Mammary epithelial cell (primary cell): ENCODE measurements at regions of chr19 and their contacts with region 1.

Region 1: GRCh38 chr19:46503848-46504453 is 8.3 kb upstream of the PNMA8B start:
- DNase-seq: no peak
- H3K4me3 ChIP-seq: no peak overlapping the region
- H3K27ac ChIP-seq: no peak overlapping the region
- H3K4me1 ChIP-seq: no peaks in the 10 kb centered on the region
- H3K27me3 ChIP-seq: no peaks in the 10 kb centered on the region
- CTCF ChIP-seq: no peak

Region 2: DNA sequence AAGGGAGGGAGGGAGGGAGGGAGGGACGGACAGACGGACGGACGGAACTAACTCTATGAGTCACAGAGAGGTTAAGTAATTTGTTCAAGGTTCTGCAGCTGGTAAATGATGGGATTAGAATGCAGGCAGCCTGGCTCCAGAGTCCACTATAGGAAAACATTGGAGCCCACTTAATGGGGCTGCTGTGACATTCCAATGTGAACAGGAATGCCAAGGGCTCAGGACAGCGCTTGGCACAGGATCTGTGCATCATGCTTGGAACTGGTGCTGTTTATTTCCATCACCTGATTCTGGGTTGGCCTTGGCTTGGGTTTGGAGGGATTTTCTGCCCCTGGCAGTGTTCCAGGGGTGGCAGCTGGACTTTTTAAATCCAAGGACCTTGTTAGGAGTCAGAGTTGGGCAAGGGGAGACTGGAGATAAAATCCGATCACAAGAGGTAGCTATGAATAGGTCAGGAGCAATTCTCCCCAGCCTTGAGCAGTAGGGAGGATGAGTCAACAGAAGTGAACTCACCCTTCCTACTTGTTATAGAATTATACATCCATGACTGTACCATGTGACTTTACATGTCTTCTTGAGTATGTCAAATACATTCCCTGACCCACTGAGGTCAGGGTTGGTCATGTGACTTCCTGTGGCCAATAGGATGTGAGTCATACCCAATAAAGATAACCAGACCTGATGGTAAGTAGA is 214.9 kb before region 1 on chr19:
- CTCF ChIA-PET with region 1: no interaction called
- dilution Hi-C with region 1: no loop called
- in situ Hi-C with region 1: loop called in 1 of 2 experiments (anchors 10 kb)
- intact Hi-C with region 1: no loop called
- DNase-seq: peak; percentile 94
- H3K4me3 ChIP-seq: no peak overlapping the region
- H3K27ac ChIP-seq: peak overlapping the region; percentile 45
- H3K4me1 ChIP-seq: peaks cover 10% of the 10 kb centered on the region
- H3K27me3 ChIP-seq: no peaks in the 10 kb centered on the region
- CTCF ChIP-seq: no peak

Region 3: GRCh38 chr19:46600384-46601317 is 96.7 kb after region 1 on chr19:
- CTCF ChIA-PET with region 1: no interaction called
- dilution Hi-C with region 1: no loop called
- in situ Hi-C with region 1: no loop called
- intact Hi-C with region 1: no loop called
- DNase-seq: peak; percentile 97
- H3K4me3 ChIP-seq: peak overlapping the region; percentile 77 to 98 (median 97)
- H3K27ac ChIP-seq: peak overlapping the region; percentile 100
- H3K4me1 ChIP-seq: peaks cover 16% of the 10 kb centered on the region
- H3K27me3 ChIP-seq: no peaks in the 10 kb centered on the region
- CTCF ChIP-seq: no peak